Common myeloid progenitor, CD34-positive (primary cell): ENCODE measurements at regions of chr7 and their contacts with region 1.

Region 1: GRCh38 chr7:74026903-74027551 is 946 bp upstream of the ELN start:
- DNase-seq: peak; percentile 43 to 64 (median 64)
- H3K4me3 ChIP-seq: peak overlapping the region in 1 of 7 experiments; percentile 19
- H3K27ac ChIP-seq: no peak overlapping the region
- H3K4me1 ChIP-seq: peaks cover 15 to 91% (median 83%) of the 10 kb centered on the region in 4 experiments
- H3K27me3 ChIP-seq: no peaks in the 10 kb centered on the region

Region 2: DNA sequence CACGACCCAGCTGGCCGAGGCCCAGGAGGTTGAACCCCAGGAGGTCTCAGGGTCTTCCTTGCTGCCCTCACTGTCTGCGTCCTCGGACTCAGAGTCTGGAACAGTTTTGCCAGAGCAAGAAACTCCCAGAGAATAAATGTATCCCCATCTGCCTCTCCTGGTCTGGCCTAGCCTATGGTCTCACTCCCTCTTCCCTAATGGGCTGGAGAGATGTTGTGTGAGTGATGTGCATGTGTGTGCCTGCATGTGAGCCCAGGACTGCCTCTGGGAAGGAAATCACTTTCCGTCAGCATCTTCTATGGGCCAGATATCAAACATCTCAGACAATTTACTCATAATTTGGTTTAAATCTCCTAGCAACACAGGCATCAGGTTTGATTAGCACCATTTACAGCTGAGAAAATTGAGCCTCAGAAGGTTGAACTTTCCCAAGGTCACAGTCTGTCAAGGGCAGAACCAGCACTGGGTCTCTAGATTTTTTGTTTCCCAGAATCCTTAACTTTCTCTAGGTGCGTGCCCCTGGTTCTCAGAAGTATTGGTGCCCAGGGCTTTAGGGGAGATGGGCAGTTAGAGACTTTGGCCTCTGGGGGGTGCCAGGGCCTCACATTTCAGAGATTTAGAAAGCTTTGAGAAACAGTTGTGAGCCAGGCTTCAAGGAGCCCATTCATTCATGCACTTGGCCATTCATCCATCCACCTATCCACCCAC is 161.1 kb before region 1 on chr7:
- CTCF ChIA-PET with region 1: interaction called, 22 read pairs
- POLR2A ChIA-PET with region 1: no interaction called
- DNase-seq: peak; percentile 64 to 79 (median 70)
- H3K4me3 ChIP-seq: no peak overlapping the region
- H3K27ac ChIP-seq: no peak overlapping the region
- H3K4me1 ChIP-seq: no peaks in the 10 kb centered on the region
- H3K27me3 ChIP-seq: no peaks in the 10 kb centered on the region

Region 3: GRCh38 chr7:73978661-73979563 is 48.1 kb before region 1 on chr7:
- CTCF ChIA-PET with region 1: interaction called, 44 read pairs
- POLR2A ChIA-PET with region 1: interaction called, 4 read pairs
- DNase-seq: peak; percentile 59 to 78 (median 74)
- H3K4me3 ChIP-seq: peak overlapping the region in 1 of 7 experiments; percentile 22
- H3K27ac ChIP-seq: no peak overlapping the region
- H3K4me1 ChIP-seq: peaks cover 0 to 24% (median 20%) of the 10 kb centered on the region in 4 experiments
- H3K27me3 ChIP-seq: no peaks in the 10 kb centered on the region

Region 4: DNA sequence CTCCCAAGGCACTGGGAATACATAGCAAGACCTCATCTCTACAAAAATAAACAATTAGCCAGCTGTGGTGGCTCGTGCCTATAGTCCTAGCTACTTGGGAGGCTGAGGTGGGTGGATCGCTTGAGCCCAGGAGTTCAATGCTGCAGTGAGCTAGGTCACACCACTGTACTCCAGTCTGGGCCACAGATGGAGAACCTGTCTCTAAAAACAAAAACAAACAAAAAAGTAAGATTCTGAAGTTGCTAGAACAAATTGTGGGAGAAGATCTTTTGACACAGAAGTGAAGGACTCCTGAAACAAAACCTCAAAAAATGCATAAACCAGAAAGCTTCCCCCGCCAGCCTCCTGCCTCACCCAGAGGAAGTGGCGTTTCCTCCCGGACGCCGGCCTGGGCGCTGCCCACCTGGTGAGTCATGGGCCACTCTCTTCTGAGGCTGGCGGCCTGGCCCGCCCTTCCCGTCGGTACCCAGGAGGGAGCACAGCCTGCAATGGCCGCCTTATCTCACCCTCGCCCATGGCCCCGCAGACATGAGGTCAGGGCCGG is 24.5 kb before region 1 on chr7:
- CTCF ChIA-PET with region 1: interaction called, 22 read pairs
- POLR2A ChIA-PET with region 1: interaction called, 18 read pairs
- DNase-seq: peak; percentile 73 to 90 (median 86)
- H3K4me3 ChIP-seq: peak overlapping the region in 4 of 7 experiments; percentile 3 to 36 (median 26)
- H3K27ac ChIP-seq: peak overlapping the region in 1 of 2 experiments; percentile 51
- H3K4me1 ChIP-seq: peaks cover 9 to 36% (median 33%) of the 10 kb centered on the region in 4 experiments
- H3K27me3 ChIP-seq: no peaks in the 10 kb centered on the region

Region 5: GRCh38 chr7:74043523-74043951 is 16.5 kb after region 1 on chr7:
- CTCF ChIA-PET with region 1: interaction called, 16 read pairs
- POLR2A ChIA-PET with region 1: no interaction called
- DNase-seq: no peak
- H3K4me3 ChIP-seq: peak overlapping the region in 1 of 7 experiments; percentile 48
- H3K27ac ChIP-seq: no peak overlapping the region
- H3K4me1 ChIP-seq: peaks cover 0 to 41% (median 7%) of the 10 kb centered on the region in 4 experiments
- H3K27me3 ChIP-seq: no peaks in the 10 kb centered on the region

Region 6: GRCh38 chr7:74121401-74122249 is 94.6 kb after region 1 on chr7:
- CTCF ChIA-PET with region 1: no interaction called
- POLR2A ChIA-PET with region 1: no interaction called
- DNase-seq: no peak
- H3K4me3 ChIP-seq: no peak overlapping the region
- H3K27ac ChIP-seq: no peak overlapping the region
- H3K4me1 ChIP-seq: no peaks in the 10 kb centered on the region
- H3K27me3 ChIP-seq: no peaks in the 10 kb centered on the region

Region 7: GRCh38 chr7:74141705-74142104 is 114.7 kb after region 1 on chr7:
- CTCF ChIA-PET with region 1: no interaction called
- POLR2A ChIA-PET with region 1: no interaction called
- DNase-seq: peak in 2 of 3 donors; percentile 11 to 29
- H3K4me3 ChIP-seq: no peak overlapping the region
- H3K27ac ChIP-seq: no peak overlapping the region
- H3K4me1 ChIP-seq: peaks cover 0 to 5% (median 0%) of the 10 kb centered on the region in 4 experiments
- H3K27me3 ChIP-seq: no peaks in the 10 kb centered on the region